ENCODE measurements at regions of chr11 and their contacts with region 1.

Region 1: GRCh38 chr11:2885676-2886081 is at the start of gene CDKN1C:
- DNase-seq: no peak
- ATAC-seq: no peak
- H3K4me3 ChIP-seq: no peak within 1 kb of the TSS
- H3K27ac ChIP-seq: no peak within 1 kb of the TSS
- H3K4me1 ChIP-seq: peaks cover 25% of the 10 kb centered on the region
- H3K27me3 ChIP-seq: peaks cover 6 to 33% of the 10 kb centered on the region in 2 experiments; a peak in 4 of 5 replicates
- CTCF ChIP-seq: no peak
- EP300 ChIP-seq: no peak
- POLR2A ChIP-seq: no peak
- RAD21 ChIP-seq: no peak
- total RNA-seq, gene CDKN1C: not detected in 2 replicates

Region 2: DNA sequence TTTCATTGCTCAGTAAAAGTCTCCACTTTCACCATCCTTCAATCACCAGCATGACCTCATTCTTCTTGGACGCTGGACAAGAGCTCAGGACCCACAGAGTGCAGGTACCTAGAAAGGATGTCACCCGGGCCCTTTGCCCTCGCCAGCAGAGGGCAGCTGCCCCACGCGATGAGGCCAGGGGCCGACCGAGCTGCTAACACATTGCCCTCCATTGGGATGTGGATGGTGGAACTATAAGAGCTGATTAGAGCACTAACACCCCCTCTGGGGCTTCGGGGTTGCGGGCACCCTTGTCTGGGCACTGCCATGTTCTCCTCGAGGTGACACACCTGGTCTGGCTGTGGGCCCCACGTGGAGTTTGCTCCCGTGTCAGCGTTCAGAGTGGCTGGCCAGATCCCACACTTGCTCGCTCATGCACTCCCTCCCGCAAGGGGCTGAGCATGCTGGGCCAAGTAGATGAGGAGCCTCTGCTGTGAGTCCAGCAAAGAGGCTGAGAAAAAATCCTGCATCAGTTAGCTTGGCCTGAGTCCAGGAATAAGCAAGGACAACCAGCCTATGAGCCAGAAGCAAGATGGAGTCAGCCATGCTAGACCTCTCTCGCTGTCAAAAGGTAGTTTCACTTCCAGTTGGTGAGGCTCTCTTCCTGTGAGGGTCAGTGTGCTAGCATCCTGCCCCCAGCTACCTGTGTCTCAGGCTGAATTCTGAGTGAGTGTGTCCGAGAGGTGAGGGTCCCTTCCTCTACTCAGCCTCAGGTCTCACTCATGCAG is 1178.9 kb before region 1 on chr11:
- CTCF ChIA-PET with region 1: no interaction called
- POLR2A ChIA-PET with region 1: no interaction called
- in situ Hi-C with region 1: no loop called
- intact Hi-C with region 1: no loop called
- DNase-seq: no peak
- ATAC-seq: peak; percentile 65
- H3K4me3 ChIP-seq: no peak overlapping the region
- H3K27ac ChIP-seq: no peak overlapping the region
- H3K4me1 ChIP-seq: no peaks in the 10 kb centered on the region
- H3K27me3 ChIP-seq: peaks cover 5 to 24% of the 10 kb centered on the region in 2 experiments; a peak in 4 of 5 replicates
- CTCF ChIP-seq: peak; percentile 59
- EP300 ChIP-seq: no peak
- POLR2A ChIP-seq: no peak
- RAD21 ChIP-seq: no peak

Region 3: DNA sequence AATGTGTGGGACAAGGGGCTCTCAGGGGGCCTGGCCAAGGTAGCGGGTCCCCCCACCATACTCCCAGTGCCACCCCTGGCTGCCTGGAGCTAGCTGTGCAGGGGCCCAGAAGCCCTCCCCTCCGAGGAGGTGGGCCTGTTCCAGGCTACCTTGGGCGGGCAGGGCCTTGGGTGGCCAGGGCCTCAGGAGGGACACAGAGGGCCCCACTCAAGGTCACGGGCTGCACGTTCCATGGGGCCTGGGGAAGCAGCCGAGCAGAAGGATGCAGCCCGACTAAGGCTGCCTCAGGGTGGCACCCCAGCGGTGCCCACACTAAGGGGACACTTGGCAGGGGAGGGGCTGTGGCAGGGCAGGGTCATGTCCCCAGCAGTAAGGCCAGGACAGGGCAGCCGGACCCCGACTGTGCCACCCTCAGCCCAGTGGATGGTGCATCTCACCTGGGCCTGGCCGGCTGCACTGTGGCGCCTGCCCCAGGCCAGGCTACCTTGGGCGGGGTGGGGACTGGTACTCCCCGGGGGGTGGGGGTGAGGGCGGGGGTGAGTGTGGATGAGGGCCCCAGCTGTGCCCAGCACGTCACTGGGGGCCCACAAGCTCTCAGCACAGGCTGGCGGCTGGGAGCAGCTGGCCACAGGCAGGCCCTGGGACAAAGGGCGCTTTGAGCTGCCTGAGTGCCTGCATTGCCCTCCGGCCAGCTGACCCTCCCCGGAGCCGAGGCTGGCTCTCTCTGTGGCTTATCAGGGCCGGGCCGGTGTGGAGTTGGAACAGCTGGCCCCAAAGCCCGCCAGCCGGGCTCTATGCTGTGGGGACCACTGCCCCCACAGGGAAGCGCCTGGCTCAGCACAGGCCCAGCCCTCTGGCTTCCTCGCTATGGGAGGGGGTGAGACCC is 323.7 kb before region 1 on chr11:
- CTCF ChIA-PET with region 1: no interaction called
- POLR2A ChIA-PET with region 1: interaction called, 10 read pairs
- in situ Hi-C with region 1: no loop called
- intact Hi-C with region 1: no loop called
- DNase-seq: peak; percentile 76
- ATAC-seq: peak; percentile 86
- H3K4me3 ChIP-seq: peak overlapping the region in 1 of 3 experiments; percentile 39; a peak in 1 of 6 replicates
- H3K27ac ChIP-seq: peak overlapping the region; percentile 91
- H3K4me1 ChIP-seq: peaks cover 60% of the 10 kb centered on the region
- H3K27me3 ChIP-seq: peaks cover 7 to 26% of the 10 kb centered on the region in 2 experiments; a peak in 4 of 5 replicates
- CTCF ChIP-seq: no peak
- EP300 ChIP-seq: peak in 1 of 2 experiments; percentile 50; a peak in 1 of 4 replicates
- POLR2A ChIP-seq: no peak
- RAD21 ChIP-seq: 0 out of 2 replicates have a peak, but pooled peaks have one; percentile 20